Activated T-helper 2 cell treated with anti-CD3 and anti-CD28 coated beads, Interferon-gamma antibody, Interleukin-2, Interleukin-4, amounts not matched to agents 10 μg/mL and 5 μg/mL and 100 μg/mL, durations not matched to agents 14 hours and 24 hours and 36 hours (primary cell): ENCODE measurements at regions of chr7 and their contacts with region 1.

Region 1: GRCh38 chr7:105013221-105013815 is 687 bp upstream of the KMT2E start:
- DNase-seq: peak; percentile 92
- H3K4me3 Mint-ChIP-seq: peak overlapping the region; percentile 91
- H3K27ac Mint-ChIP-seq: peak overlapping the region; percentile 100
- H3K4me1 Mint-ChIP-seq: peaks cover 35% of the 10 kb centered on the region
- H3K27me3 Mint-ChIP-seq: no peaks in the 10 kb centered on the region

Region 2: GRCh38 chr7:104943502-104944343 is 69.6 kb before region 1 on chr7:
- intact Hi-C with region 1: loop called (anchors 1 kb)
- DNase-seq: peak; percentile 78
- H3K4me3 Mint-ChIP-seq: peak overlapping the region; percentile 97
- H3K27ac Mint-ChIP-seq: peak overlapping the region; percentile 99
- H3K4me1 Mint-ChIP-seq: peaks cover 50% of the 10 kb centered on the region
- H3K27me3 Mint-ChIP-seq: no peaks in the 10 kb centered on the region

Region 3: GRCh38 chr7:104956753-104957450 is 56.4 kb before region 1 on chr7:
- intact Hi-C with region 1: loop called (anchors 1 kb)
- DNase-seq: peak; percentile 48
- H3K4me3 Mint-ChIP-seq: peak overlapping the region; percentile 65
- H3K27ac Mint-ChIP-seq: peak overlapping the region; percentile 100
- H3K4me1 Mint-ChIP-seq: peaks cover 59% of the 10 kb centered on the region
- H3K27me3 Mint-ChIP-seq: no peaks in the 10 kb centered on the region

Region 4: GRCh38 chr7:105003275-105003674 is 10.0 kb before region 1 on chr7:
- intact Hi-C with region 1: loop called (anchors 1 kb)
- DNase-seq: no peak
- H3K4me3 Mint-ChIP-seq: peak overlapping the region; percentile 58
- H3K27ac Mint-ChIP-seq: peak overlapping the region; percentile 76
- H3K4me1 Mint-ChIP-seq: peaks cover 75% of the 10 kb centered on the region
- H3K27me3 Mint-ChIP-seq: no peaks in the 10 kb centered on the region

Region 5: GRCh38 chr7:105024743-105025142 is 11.4 kb after region 1 on chr7:
- intact Hi-C with region 1: loop called (anchors 1 kb)
- DNase-seq: no peak
- H3K4me3 Mint-ChIP-seq: peak overlapping the region; percentile 8
- H3K27ac Mint-ChIP-seq: no peak overlapping the region
- H3K4me1 Mint-ChIP-seq: peaks cover 74% of the 10 kb centered on the region
- H3K27me3 Mint-ChIP-seq: no peaks in the 10 kb centered on the region

Region 6: GRCh38 chr7:105035349-105035748 is 22.0 kb after region 1 on chr7:
- intact Hi-C with region 1: no loop called
- DNase-seq: no peak
- H3K4me3 Mint-ChIP-seq: no peak overlapping the region
- H3K27ac Mint-ChIP-seq: no peak overlapping the region
- H3K4me1 Mint-ChIP-seq: peaks cover 40% of the 10 kb centered on the region
- H3K27me3 Mint-ChIP-seq: no peaks in the 10 kb centered on the region

Region 7: GRCh38 chr7:105046414-105046813 is 33.1 kb after region 1 on chr7:
- intact Hi-C with region 1: loop called (anchors 5 kb)
- DNase-seq: no peak
- H3K4me3 Mint-ChIP-seq: no peak overlapping the region
- H3K27ac Mint-ChIP-seq: no peak overlapping the region
- H3K4me1 Mint-ChIP-seq: peaks cover 22% of the 10 kb centered on the region
- H3K27me3 Mint-ChIP-seq: no peaks in the 10 kb centered on the region

Region 8: GRCh38 chr7:105346593-105347322 is 333.4 kb after region 1 on chr7:
- intact Hi-C with region 1: loop called (anchors 5 kb)
- DNase-seq: no peak
- H3K4me3 Mint-ChIP-seq: peak overlapping the region; percentile 17
- H3K27ac Mint-ChIP-seq: peak overlapping the region; percentile 47
- H3K4me1 Mint-ChIP-seq: peaks cover 39% of the 10 kb centered on the region
- H3K27me3 Mint-ChIP-seq: no peaks in the 10 kb centered on the region